ENCODE measurements at regions of chr1 and their contacts with region 1.

Region 1: DNA sequence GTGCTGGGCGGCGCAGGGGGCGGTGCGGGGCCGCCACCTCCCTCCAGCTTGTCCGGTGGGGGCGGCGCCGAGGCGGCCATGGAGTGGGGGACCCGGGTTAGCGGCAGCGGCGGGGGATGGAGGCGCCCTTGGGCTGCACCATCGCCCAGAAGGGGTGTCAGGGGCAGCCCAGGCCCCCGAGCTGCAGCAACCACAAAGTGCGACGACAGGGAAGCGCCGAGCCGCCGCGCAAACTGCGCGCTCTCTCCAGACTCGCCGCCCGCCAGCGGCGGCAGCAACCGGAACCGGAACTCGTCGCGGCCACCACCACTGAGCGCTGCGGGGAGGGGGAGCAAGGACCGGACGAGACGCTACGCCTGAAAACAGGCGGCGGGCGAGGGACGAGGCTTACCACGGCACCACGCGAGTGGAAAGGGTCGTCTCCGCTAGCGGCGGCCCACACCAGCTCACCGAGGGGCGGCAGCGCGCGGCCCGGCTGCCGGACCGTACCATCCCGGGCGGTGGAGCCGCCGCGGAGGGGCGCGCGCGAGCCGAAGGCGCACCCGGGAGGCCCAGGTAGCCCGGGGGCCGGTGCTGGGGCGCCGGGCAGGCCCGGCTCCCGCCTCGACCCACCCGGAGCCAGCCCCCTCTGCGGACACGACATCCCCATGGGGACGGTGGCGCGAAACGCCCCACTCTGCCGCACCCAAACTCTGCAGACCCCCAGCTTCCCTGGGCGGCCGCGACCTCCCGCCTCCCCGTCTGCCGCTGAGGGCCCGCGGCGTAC is at the start of gene PYGO2:
- DNase-seq: peak; percentile 85
- ATAC-seq: peak; percentile 88
- H3K4me3 Mint-ChIP-seq: peak within 1 kb of the TSS; percentile 87
- H3K27ac Mint-ChIP-seq: peak within 1 kb of the TSS; percentile 86
- H3K4me1 Mint-ChIP-seq: peaks cover 45% of the 10 kb centered on the region
- H3K27me3 Mint-ChIP-seq: no peaks in the 10 kb centered on the region
- CTCF ChIP-seq: no peak
- total RNA-seq, gene PYGO2: 33.1 and 38.1 TPM in 2 replicates

Region 2: DNA sequence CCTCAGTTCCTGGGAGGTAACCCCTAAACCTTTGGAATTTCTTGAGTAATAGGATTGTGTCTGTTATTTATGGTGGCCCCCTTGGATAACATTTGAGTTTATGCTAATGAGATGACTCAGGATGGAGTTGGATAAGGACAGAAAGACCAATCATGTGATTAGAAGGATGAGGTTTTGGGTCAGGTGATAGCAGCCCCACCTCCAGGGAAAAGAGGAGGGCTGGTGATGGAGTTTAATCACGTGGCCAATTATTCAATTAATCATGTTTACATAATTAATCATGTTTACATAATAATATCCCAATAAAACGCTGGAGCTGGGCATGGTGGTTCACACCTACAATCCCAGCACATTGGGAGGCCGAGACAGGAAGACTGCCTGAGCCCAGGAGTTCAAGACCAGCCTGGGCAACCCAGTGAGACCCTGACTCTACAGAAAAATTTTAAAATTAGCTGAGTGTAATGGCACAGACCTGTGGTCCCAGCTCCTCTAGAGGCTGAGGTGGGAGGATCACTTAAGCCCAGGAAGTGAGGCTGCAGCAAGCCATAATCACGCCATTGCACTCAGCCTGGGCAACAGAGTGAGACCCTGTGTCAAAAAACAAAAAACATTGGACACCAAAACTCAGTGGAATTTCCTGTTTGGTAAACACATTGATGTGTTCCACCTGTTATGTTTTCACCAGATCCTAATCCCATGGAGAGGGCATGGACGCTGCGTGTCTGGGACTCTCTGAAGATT is 880.1 kb before region 1 on chr1:
- CTCF ChIA-PET with region 1: no interaction called
- POLR2A ChIA-PET with region 1: no interaction called
- intact Hi-C with region 1: no loop called
- DNase-seq: no peak
- ATAC-seq: no peak
- H3K4me3 Mint-ChIP-seq: no peak overlapping the region
- H3K27ac Mint-ChIP-seq: no peak overlapping the region
- H3K4me1 Mint-ChIP-seq: no peaks in the 10 kb centered on the region
- H3K27me3 Mint-ChIP-seq: peaks cover 9% of the 10 kb centered on the region
- CTCF ChIP-seq: no peak

Region 3: GRCh38 chr1:154982897-154983648 is 21.4 kb after region 1 on chr1 and contains the start of gene FLAD1:
- CTCF ChIA-PET with region 1: interaction called, 3 read pairs
- POLR2A ChIA-PET with region 1: interaction called, 10 read pairs
- intact Hi-C with region 1: no loop called
- DNase-seq: peak; percentile 81
- ATAC-seq: peak; percentile 100
- H3K4me3 Mint-ChIP-seq: no peak within 1 kb of the TSS
- H3K27ac Mint-ChIP-seq: no peak within 1 kb of the TSS
- H3K4me1 Mint-ChIP-seq: peaks cover 9% of the 10 kb centered on the region
- H3K27me3 Mint-ChIP-seq: no peaks in the 10 kb centered on the region
- CTCF ChIP-seq: no peak
- total RNA-seq, gene FLAD1: 64.1 and 69.0 TPM in 2 replicates

Region 4: GRCh38 chr1:155050560-155051341 is 89.1 kb after region 1 on chr1 and contains the start of gene ADAM15:
- CTCF ChIA-PET with region 1: interaction called, 8 read pairs
- POLR2A ChIA-PET with region 1: interaction called, 5 read pairs
- intact Hi-C with region 1: loop called (anchors 2 kb)
- DNase-seq: peak; percentile 78
- ATAC-seq: peak; percentile 83
- H3K4me3 Mint-ChIP-seq: peak within 1 kb of the TSS; percentile 86
- H3K27ac Mint-ChIP-seq: no peak within 1 kb of the TSS
- H3K4me1 Mint-ChIP-seq: peaks cover 22% of the 10 kb centered on the region
- H3K27me3 Mint-ChIP-seq: no peaks in the 10 kb centered on the region
- CTCF ChIP-seq: peak; percentile 56
- total RNA-seq, gene ADAM15: 11.3 and 13.7 TPM in 2 replicates

Region 5: GRCh38 chr1:155744711-155745283 is 783.1 kb after region 1 on chr1:
- CTCF ChIA-PET with region 1: no interaction called
- POLR2A ChIA-PET with region 1: no interaction called
- intact Hi-C with region 1: no loop called
- DNase-seq: no peak
- ATAC-seq: no peak
- H3K4me3 Mint-ChIP-seq: peak overlapping the region; percentile 94
- H3K27ac Mint-ChIP-seq: peak overlapping the region; percentile 90
- H3K4me1 Mint-ChIP-seq: peaks cover 6% of the 10 kb centered on the region
- H3K27me3 Mint-ChIP-seq: no peaks in the 10 kb centered on the region
- CTCF ChIP-seq: no peak

Region 6: DNA sequence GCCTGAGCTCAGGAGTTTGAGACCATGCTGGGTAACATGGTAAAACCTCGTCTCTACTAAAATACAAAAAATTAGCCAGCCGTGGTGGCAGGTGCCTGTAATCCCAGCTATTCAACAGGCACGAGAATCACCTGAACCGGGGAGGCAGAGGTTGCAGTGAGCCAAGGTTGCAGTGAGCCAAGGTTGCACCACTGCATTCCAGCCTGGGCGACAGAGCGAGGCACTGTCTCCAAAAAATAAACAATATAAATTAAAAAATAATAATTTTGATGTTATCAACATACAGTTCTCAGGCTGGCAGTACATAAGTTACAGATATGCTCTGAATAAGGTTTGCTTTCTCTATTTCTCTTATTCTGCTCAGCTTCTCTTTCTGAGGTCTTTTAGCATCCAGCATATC is 867.7 kb after region 1 on chr1:
- CTCF ChIA-PET with region 1: no interaction called
- POLR2A ChIA-PET with region 1: no interaction called
- intact Hi-C with region 1: no loop called
- DNase-seq: no peak
- ATAC-seq: no peak
- H3K4me3 Mint-ChIP-seq: no peak overlapping the region
- H3K27ac Mint-ChIP-seq: no peak overlapping the region
- H3K4me1 Mint-ChIP-seq: peaks cover 17% of the 10 kb centered on the region
- H3K27me3 Mint-ChIP-seq: no peaks in the 10 kb centered on the region
- CTCF ChIP-seq: no peak

Measured in activated B cell treated with CpG ODN at 0.5 μM for 24 hours (primary cell).